Activated B cell treated with CpG ODN at 0.5 μM for 24 hours (primary cell): ENCODE measurements at regions of chr4 and their contacts with region 1.

Region 1: GRCh38 chr4:85734424-85734831 is 259.5 kb downstream of the ARHGAP24 start:
- DNase-seq: no peak
- ATAC-seq: peak; percentile 56
- H3K4me3 Mint-ChIP-seq: peak overlapping the region; percentile 52
- H3K27ac Mint-ChIP-seq: peak overlapping the region; percentile 83
- H3K4me1 Mint-ChIP-seq: peaks cover 82% of the 10 kb centered on the region
- H3K27me3 Mint-ChIP-seq: no peaks in the 10 kb centered on the region
- CTCF ChIP-seq: no peak

Region 2: DNA sequence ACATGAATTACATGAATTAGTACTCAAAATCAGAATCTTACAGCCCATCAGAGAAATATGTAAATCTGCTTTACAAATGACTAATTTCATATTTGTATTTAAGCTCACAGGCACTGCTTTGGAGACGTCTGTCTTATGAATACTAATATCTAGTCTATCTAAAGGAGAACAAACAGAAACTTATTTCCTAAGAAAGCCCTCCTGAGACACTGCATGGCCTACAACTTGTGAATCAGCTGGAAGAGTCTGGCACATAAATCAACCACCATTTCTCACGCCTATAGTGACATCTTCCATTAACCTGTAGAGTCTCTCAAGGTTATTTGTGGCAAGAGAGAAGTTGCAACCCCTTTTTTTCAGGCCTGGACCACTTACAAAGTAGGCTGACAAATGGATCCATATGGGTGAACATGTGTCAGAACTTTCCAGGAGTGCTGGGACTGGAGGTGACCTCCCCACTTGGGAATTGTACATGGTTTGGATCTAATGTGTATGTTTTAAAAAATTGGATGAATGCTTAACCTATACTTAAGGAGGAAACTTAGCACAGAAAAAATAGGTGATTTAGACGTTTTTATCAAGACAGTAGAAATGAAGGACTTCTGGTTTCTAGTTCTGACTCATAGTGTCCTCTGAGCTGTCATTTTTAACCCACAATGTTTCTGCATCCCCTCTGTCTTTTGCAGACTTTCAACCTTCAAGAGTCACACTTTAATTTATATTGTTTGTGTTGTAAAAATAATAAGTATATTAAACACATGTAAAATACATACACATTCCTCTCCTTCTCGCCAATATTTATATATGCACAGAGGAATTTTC is 342.6 kb before region 1 on chr4:
- CTCF ChIA-PET with region 1: no interaction called
- POLR2A ChIA-PET with region 1: interaction called, 12 read pairs
- intact Hi-C with region 1: no loop called
- DNase-seq: no peak
- ATAC-seq: peak; percentile 63
- H3K4me3 Mint-ChIP-seq: peak overlapping the region; percentile 61
- H3K27ac Mint-ChIP-seq: peak overlapping the region; percentile 84
- H3K4me1 Mint-ChIP-seq: peaks cover 35% of the 10 kb centered on the region
- H3K27me3 Mint-ChIP-seq: no peaks in the 10 kb centered on the region
- CTCF ChIP-seq: no peak